ENCODE measurements at regions of chr18 and their contacts with region 1.

Region 1: DNA sequence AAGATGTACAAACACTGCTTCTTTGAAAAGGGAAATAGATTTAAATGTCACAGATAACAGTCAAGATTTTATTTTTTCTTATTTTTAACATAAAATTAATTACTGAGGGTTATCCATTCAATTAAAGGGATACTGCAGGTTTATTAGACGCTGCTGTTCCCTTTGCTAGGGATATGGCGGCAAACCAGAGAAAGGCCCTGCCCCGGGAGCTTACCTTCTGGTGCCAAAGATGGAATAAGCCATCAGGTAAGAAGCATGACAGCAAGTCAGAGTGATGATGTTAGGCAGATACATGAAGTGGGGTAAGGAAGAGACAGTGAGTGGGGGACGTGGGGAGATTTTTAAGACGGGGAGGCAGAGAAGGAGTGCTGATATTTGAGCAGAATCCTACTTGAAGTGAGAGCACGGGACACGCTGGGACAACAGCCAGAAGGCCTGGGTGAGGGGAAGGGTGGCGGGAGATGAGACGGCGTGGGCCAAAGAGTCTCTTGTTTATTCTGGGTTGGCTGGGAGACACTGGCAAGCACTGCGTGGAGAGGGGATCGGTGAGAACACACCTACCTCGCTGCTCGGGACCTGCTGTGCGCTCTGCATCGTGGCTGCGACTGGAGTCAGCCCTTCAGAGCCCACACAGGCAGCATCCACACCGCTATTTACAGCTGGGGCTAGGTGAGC is 250.5 kb upstream of the TMEM200C start:
- DNase-seq: no peak
- H3K4me3 ChIP-seq: no peak overlapping the region
- H3K27ac ChIP-seq: no peak overlapping the region
- H3K4me1 ChIP-seq: no peaks in the 10 kb centered on the region
- H3K27me3 ChIP-seq: no peaks in the 10 kb centered on the region
- CTCF ChIP-seq: no peak
- POLR2A ChIP-seq: no peak

Region 2: DNA sequence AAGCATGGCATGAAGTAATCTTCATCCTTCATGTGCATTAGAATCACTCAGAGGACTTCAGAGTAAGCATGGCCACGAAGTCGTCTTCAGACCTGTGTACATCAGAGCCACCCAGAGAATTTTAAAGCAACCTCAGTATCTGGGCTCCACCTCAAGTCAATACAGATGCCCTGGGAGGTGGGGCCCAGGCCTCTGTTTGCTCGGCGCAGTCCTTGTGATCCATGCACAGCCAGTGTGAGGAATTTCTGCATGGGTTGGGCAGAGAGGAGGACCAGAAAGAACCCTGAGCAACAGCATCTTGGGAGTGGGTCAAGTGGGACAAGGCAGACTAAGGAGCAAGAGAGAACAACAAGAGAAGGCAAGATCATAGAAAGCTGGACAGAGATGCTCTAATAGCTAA is 30.1 kb before region 1 on chr18:
- intact Hi-C with region 1: loop called (anchors 1 kb)
- DNase-seq: no peak
- H3K4me3 ChIP-seq: no peak overlapping the region
- H3K27ac ChIP-seq: no peak overlapping the region
- H3K4me1 ChIP-seq: no peaks in the 10 kb centered on the region
- H3K27me3 ChIP-seq: no peaks in the 10 kb centered on the region
- CTCF ChIP-seq: no peak
- POLR2A ChIP-seq: no peak

Measured in vagina (tissue), 2 donors.